Left cardiac atrium (tissue), 4 donors: ENCODE measurements at regions of chr9 and their contacts with region 1.

Region 1: DNA sequence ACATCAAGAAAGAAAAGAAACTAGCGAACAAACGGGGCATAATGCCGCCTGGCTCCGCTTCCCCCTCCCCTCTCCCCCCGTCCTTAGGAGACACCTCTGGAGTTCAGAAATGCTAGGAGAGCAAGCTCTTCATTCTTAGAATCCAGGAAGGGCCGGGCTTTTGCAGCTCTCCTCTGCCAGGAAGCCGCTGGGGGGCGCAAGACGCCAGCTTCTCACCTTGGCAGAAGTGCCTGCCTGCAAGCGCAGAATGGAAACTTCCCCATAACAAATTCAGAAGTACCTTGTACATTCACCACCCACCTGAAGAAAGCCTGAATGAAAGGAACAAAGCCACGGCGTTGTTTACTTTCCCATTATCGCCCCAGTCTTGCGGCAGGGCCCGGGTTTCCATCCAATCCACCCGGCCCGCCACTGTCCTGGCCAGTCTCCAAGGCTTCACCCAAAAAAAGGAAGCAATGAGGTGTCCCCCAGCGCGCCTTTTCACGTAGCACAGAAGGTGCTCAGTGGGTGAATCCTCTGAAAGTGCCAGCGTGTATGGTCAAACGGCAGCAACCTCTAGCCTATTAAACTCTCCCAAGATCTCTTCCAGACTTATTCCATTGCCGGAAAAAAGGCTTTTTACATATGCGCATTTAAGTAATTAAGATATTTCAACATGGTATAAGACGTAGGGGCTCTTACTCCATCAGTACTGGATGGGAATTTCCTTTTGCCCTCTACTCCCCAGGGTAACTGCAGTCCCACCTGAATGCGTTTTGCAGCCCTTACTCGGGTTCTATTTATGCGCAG is 1.6 kb upstream of the GADD45G start:
- DNase-seq: peak; percentile 90
- ATAC-seq: peak; percentile 17 to 18

Region 2: GRCh38 chr9:89466451-89467277 is 136.5 kb before region 1 on chr9:
- intact Hi-C with region 1: no loop called
- DNase-seq: no peak
- ATAC-seq: no peak

Region 3: GRCh38 chr9:89738137-89738932 is 135.2 kb after region 1 on chr9:
- intact Hi-C with region 1: loop called in 1 of 2 experiments (anchors 2 kb)
- DNase-seq: peak; percentile 54
- ATAC-seq: peak; percentile 69 to 75

Region 4: DNA sequence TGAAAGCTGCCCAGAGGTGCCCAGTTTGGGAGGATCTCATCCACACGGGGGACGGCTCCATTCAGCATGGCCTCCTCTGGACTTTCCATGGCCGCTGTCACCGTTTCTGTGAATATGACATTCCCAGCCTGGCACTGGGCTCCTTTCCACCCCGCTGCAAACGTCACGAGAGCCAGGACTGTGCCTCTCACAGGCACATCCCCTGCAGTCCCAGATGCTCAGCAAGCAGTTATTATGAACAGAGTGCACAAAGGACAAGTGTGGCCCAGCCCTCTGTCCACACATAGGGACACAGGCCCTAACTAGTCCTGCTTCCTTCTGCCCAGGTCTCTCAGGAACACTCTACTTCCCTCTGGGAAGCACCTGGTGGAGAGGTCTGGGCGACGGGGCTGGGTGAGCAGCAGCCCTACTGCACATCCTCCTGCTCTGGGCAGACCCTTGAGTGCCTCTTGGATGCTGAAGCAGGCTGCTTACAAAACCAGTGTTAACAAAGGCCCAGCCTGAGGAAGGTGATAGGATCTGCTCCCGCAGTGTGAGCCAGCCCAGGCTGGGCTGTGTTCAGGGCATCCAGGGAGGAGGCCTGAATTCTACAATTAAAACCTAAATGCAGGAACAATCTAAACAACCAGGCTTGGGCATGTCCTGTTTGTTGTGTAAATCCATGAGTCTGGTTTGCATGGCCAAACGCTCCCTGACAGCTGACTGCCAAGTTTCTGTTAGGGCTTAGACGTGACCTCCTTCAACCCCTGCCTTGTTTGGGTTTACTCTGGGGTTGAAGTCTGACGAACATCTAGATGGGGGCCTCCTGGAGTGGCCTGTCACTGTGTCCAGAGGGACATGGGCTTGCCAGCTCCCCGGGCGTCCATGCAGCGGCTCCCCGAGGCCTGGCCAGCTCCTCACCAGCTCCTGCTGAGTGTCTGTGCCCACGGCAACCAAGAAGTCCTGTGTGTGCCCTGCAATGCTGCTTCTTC is 271.5 kb after region 1 on chr9:
- intact Hi-C with region 1: loop called in 1 of 2 experiments (anchors 5 kb)
- DNase-seq: peak; percentile 54
- ATAC-seq: peak; percentile 8 to 39

Region 5: DNA sequence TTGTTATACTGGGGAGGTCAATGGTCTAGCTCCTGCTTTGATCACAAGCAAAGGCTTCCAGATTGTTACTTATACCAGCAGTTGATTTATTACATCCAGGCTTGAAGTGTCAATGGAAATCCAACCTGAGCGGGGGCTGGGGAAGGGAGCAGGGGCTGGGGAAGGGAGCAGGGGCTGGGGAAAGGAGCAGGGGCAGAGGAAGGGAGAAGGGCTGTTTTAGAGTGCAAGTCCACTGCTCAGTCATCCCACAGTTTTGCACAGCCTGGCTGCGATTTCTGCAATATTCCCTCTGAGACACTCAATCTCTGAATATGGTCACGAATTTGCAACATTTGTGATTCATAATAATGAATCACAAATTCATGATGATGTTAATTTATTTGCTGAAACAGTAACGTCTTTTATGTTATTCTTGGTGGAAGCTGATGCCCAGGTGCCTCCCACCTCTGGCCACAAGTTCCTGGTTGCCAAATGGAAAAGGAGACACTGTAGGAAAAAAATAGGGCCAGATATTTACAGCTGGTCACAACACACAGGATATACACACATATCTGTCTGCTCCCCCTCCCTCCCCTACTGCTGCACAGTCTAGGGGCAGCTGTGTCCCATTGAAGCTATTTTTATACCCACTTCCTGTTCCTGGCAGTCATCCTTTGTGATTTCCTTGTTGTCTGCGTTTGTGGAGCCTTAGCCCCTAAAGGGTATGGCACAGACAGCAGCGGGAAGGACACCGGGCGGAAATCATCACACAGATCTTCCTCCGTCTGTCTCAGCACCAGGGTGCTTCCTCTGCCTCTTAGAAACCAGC is 326.7 kb after region 1 on chr9:
- intact Hi-C with region 1: loop called (anchors 5 to 10 kb)
- DNase-seq: no peak
- ATAC-seq: peak; percentile 71 to 89

Region 6: DNA sequence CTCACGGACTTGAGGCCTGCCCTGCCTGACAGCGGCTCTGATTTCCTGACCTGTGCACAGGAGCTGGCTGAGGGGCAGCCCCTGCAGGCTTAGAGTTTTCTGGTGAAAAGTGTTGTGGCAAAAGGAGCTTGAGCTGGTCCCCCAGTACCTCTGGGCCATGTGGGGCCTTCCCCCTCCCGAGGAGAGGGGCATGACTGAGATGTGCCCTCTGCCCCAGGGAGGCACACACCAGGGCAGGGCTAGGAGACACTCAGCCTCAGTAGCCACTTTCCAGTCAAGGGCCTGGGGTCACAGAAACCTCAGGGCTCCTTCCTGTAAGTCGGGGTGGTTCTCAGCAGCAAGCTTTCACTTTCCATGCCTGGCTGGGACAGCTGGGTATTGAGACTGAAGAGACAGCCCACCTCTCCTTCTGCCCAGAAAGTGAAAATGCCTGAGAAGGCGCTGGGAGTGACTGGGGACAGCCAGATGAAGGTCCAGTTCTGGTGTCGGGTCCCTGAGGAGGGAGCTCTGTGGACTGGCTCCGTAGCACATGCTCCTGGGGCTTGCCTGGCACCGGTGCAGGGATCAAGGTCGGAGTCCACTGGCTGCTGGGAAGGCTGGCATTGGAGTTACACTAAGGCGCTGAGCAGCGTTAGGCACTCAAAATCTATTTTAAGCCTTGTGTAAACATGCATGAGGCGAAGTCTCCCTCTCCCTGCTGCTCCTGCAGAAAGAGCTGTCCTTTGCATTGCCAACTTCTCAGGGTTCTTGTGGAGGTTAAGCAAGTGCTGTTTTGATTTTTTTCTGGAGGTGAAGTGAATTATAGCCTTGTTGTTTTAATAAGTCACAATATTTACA is 396.6 kb after region 1 on chr9:
- intact Hi-C with region 1: loop called (anchors 2 to 10 kb)
- DNase-seq: peak; percentile 71
- ATAC-seq: peak; percentile 86 to 88